K562 (cell line): ENCODE measurements at regions of chr1 and their contacts with region 1.

Region 1: DNA sequence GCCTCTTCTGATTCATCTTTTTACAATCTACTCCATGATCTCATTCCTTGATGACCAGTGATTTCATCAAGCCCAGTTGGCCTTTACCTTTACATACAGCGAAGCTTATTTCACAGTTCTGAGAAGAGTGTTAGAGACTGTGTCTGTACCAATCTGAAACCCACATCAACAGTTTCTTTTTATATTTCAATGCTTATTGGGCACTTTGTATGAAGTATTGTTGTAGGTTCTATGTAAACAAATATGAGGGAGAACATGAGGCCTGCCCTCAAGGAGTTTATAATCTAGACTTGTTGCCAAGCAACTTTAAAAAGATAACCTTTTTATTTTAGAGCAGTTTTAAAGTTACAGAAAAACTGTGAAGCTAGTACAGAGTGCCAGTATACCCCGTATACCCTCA is 27.5 kb upstream of the RWDD3 start:
- DNase-seq: no peak
- ATAC-seq: no peak
- H3K4me3 ChIP-seq: no peak overlapping the region
- H3K27ac ChIP-seq: no peak overlapping the region
- H3K4me1 ChIP-seq: peaks cover 0 to 4% of the 10 kb centered on the region in 2 experiments; a peak in 3 of 5 replicates
- H3K27me3 ChIP-seq: no peaks in the 10 kb centered on the region
- CTCF ChIP-seq: no peak
- EP300 ChIP-seq: no peak
- POLR2A ChIP-seq: no peak
- RAD21 ChIP-seq: no peak

Region 2: GRCh38 chr1:95222629-95223028 is 16.1 kb after region 1 on chr1:
- CTCF ChIA-PET with region 1: no interaction called
- POLR2A ChIA-PET with region 1: interaction called, 4 read pairs
- in situ Hi-C with region 1: no loop called
- intact Hi-C with region 1: loop called (anchors 1 kb)
- DNase-seq: no peak
- ATAC-seq: no peak
- H3K4me3 ChIP-seq: no peak overlapping the region
- H3K27ac ChIP-seq: no peak overlapping the region
- H3K4me1 ChIP-seq: no peaks in the 10 kb centered on the region; a peak in 1 of 5 replicates
- H3K27me3 ChIP-seq: no peaks in the 10 kb centered on the region
- CTCF ChIP-seq: no peak
- EP300 ChIP-seq: no peak
- POLR2A ChIP-seq: no peak
- RAD21 ChIP-seq: no peak